Testis (tissue), 5 donors: ENCODE measurements at regions of chr14 and their contacts with region 1.

Region 1: DNA sequence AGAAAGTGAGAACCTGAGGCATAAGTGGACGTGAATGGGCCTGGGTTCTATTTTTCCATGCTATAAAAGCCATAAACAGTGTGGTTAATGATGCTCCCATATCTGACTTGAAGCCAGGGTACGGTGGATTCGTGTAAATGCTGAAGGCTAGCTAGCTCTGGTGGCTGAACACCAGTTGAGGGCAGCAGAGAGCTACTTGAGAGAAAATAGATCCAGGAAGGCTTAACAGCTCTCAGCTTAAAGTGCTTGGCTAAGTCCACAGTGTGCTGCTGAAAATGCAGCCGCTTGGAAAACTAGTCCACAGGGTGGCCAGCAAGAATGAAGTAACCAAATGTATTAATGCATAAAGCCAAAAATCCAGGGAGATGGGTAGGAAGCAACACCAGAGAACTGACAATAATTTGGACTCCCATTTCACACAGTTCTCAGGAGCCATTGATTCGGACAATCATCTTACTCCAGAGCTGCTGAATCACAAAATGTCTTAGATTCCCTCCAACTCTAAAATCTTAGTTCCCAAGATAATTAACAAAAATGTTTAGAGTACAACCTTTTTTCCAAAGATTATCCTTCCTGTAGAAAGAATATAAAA is 15.0 kb upstream of the FOXG1 start:
- DNase-seq: peak; percentile 73
- H3K4me3 ChIP-seq: no peak overlapping the region
- H3K27ac ChIP-seq: no peak overlapping the region
- H3K4me1 ChIP-seq: no peaks in the 10 kb centered on the region
- H3K27me3 ChIP-seq: no peaks in the 10 kb centered on the region
- CTCF ChIP-seq: peak; percentile 20 to 44 (median 39)
- POLR2A ChIP-seq: no peak

Region 2: GRCh38 chr14:29536886-29537511 is 785.4 kb after region 1 on chr14:
- intact Hi-C with region 1: loop called (anchors 10 kb)
- DNase-seq: no peak
- H3K4me3 ChIP-seq: no peak overlapping the region
- H3K27ac ChIP-seq: no peak overlapping the region
- H3K4me1 ChIP-seq: no peaks in the 10 kb centered on the region
- H3K27me3 ChIP-seq: no peaks in the 10 kb centered on the region
- CTCF ChIP-seq: peak in 1 of 3 experiments; percentile 61
- POLR2A ChIP-seq: no peak